Esophagus muscularis mucosa (tissue), 4 donors: ENCODE measurements at regions of chr15 and their contacts with region 1.

Region 1: GRCh38 chr15:71572452-71573053 is 237.8 kb upstream of the NR2E3 start:
- DNase-seq: peak; percentile 42
- H3K4me3 ChIP-seq: no peak overlapping the region
- H3K27ac ChIP-seq: no peak overlapping the region
- H3K4me1 ChIP-seq: peaks cover 0 to 7% (median 0%) of the 10 kb centered on the region in 4 donors
- H3K27me3 ChIP-seq: no peaks in the 10 kb centered on the region
- CTCF ChIP-seq: peak in 2 of 3 experiments; percentile 17 to 32
- EP300 ChIP-seq: no peak
- POLR2A ChIP-seq: no peak

Region 2: GRCh38 chr15:71411538-71412482 is 160.7 kb before region 1 on chr15:
- intact Hi-C with region 1: no loop called
- DNase-seq: no peak
- H3K4me3 ChIP-seq: peak overlapping the region in 1 of 4 donors; percentile 18
- H3K27ac ChIP-seq: peak overlapping the region in 3 of 4 donors; percentile 16 to 65 (median 51)
- H3K4me1 ChIP-seq: peaks cover 9 to 46% (median 42%) of the 10 kb centered on the region in 4 donors
- H3K27me3 ChIP-seq: no peaks in the 10 kb centered on the region
- CTCF ChIP-seq: peak in 1 of 3 experiments; percentile 22
- EP300 ChIP-seq: no peak
- POLR2A ChIP-seq: no peak

Region 3: DNA sequence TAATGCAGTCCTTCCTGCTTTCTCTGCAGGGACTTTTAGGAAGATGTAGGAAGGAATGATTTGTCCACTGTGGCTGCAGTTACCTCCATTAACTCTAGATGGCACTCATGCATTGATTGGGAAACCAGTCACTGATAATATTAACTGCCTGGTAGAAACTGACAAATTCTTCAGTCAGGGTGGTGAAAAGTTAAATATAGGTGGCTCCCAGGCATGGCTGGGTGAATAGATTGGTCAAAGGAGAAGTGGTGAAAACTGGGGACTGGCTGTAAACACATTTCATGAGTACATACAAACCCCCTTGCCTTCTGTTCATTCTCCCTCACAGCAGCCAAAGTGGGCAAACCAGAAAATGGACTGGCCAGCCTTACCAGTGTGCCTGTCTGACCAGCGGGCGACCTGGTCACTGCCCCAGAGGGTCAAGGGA is 123.9 kb before region 1 on chr15:
- intact Hi-C with region 1: no loop called
- DNase-seq: no peak
- H3K4me3 ChIP-seq: no peak overlapping the region
- H3K27ac ChIP-seq: no peak overlapping the region
- H3K4me1 ChIP-seq: peaks cover 0 to 4% (median 4%) of the 10 kb centered on the region in 4 donors
- H3K27me3 ChIP-seq: no peaks in the 10 kb centered on the region
- CTCF ChIP-seq: peak; percentile 85 to 93 (median 89)
- EP300 ChIP-seq: no peak
- POLR2A ChIP-seq: no peak

Region 4: GRCh38 chr15:71548401-71548807 is 24.1 kb before region 1 on chr15:
- intact Hi-C with region 1: no loop called
- DNase-seq: peak; percentile 74
- H3K4me3 ChIP-seq: no peak overlapping the region
- H3K27ac ChIP-seq: no peak overlapping the region
- H3K4me1 ChIP-seq: peaks cover 3 to 10% (median 7%) of the 10 kb centered on the region in 4 donors
- H3K27me3 ChIP-seq: no peaks in the 10 kb centered on the region
- CTCF ChIP-seq: no peak
- EP300 ChIP-seq: no peak
- POLR2A ChIP-seq: no peak

Region 5: DNA sequence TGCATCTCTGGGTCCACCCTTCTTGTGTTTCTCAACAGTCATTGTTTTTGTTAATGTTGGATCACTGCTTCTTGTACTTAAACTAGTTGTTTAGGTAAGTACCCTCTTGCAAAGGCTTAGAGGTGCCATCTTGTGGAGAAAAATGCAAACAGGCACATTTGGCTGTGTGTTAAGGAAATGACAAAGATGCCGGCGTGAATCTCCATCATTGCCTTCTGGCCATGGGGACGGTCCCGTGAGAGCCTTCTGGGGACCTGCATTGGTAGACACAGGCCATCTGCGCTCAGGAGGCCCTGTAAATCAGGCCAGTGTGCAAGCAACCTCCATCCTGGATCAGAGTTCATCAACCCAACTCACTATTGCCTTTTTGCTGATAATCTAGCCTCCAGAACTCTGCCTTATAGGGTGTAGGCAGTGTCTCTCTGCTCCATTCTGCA is 79.2 kb after region 1 on chr15:
- intact Hi-C with region 1: loop called (anchors 5 kb)
- DNase-seq: peak; percentile 90
- H3K4me3 ChIP-seq: no peak overlapping the region
- H3K27ac ChIP-seq: no peak overlapping the region
- H3K4me1 ChIP-seq: peaks cover 6 to 30% (median 23%) of the 10 kb centered on the region in 4 donors
- H3K27me3 ChIP-seq: no peaks in the 10 kb centered on the region
- CTCF ChIP-seq: peak; percentile 46 to 62 (median 58)
- EP300 ChIP-seq: no peak
- POLR2A ChIP-seq: no peak

Region 6: DNA sequence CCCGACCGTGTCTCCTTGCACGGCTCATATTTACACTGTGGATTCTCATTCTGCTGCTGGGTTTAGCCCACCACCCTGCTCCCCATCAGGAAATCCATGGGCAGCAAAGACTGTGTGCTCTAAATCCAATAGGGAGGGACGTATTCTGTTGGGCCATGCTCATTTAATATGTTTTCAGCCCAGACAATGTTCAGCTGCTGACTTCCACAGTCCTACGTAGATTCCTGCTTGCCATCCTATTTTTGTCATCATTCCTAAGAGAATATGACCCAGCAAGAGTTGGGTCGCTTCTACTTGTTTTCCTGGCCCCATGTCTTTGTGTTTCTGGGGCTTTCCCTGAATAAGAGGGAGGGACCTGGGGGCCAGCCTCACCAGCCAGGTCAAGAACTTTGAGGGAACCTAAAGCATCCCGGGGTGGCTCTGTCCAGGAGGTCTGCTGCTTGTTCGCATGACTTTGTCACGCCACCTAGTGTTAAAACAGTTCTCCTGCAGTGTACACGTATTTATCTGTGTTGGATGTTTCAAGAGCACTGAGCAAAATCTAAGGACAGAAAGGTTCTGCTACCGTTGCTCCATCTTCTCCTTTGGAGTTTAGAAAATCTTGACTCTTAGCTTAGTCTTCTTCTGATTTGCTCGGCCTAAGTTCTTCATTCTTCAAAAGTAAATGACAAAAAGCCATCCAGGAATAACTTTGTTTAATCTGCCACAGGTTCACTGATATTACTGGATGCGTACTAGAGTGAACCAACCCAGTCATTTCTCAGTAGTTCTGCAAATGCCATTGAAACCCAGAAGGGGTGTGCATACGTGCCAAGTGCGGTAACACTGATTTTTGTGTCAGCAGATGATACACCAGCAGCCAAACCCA is 158.0 kb after region 1 on chr15:
- intact Hi-C with region 1: loop called (anchors 5 kb)
- DNase-seq: no peak
- H3K4me3 ChIP-seq: no peak overlapping the region
- H3K27ac ChIP-seq: no peak overlapping the region
- H3K4me1 ChIP-seq: peaks cover 4 to 9% (median 8%) of the 10 kb centered on the region in 4 donors
- H3K27me3 ChIP-seq: no peaks in the 10 kb centered on the region
- CTCF ChIP-seq: peak; percentile 75 to 82 (median 75)
- EP300 ChIP-seq: no peak
- POLR2A ChIP-seq: no peak

Region 7: DNA sequence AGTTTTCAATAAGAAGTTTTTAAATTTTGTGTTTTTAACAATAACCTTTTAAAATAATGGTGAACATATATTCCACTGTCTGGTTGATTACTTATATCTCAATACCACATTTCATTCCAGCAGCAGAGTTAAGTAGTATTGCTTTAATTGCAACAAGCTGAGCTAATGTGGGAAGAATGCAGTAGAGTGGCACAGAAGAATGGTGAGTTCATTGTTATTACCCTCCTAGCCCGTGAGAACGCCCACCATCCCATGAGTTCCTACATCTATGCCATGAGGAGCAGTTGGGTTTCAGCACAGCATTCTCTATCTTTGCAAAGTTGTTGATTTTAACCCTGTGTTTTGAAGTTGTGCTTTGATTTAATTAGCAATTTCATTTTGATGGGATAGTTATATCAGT is 220.0 kb after region 1 on chr15:
- intact Hi-C with region 1: no loop called
- DNase-seq: no peak
- H3K4me3 ChIP-seq: no peak overlapping the region
- H3K27ac ChIP-seq: no peak overlapping the region
- H3K4me1 ChIP-seq: no peaks in the 10 kb centered on the region
- H3K27me3 ChIP-seq: no peaks in the 10 kb centered on the region
- CTCF ChIP-seq: no peak
- EP300 ChIP-seq: no peak
- POLR2A ChIP-seq: no peak